Left colon (tissue), 2 donors: ENCODE measurements at regions of chr14 and their contacts with region 1.

Region 1: GRCh38 chr14:22375321-22375930 is 213.6 kb downstream of the DAD1 start:
- DNase-seq: no peak
- ATAC-seq: peak; percentile 71

Region 2: DNA sequence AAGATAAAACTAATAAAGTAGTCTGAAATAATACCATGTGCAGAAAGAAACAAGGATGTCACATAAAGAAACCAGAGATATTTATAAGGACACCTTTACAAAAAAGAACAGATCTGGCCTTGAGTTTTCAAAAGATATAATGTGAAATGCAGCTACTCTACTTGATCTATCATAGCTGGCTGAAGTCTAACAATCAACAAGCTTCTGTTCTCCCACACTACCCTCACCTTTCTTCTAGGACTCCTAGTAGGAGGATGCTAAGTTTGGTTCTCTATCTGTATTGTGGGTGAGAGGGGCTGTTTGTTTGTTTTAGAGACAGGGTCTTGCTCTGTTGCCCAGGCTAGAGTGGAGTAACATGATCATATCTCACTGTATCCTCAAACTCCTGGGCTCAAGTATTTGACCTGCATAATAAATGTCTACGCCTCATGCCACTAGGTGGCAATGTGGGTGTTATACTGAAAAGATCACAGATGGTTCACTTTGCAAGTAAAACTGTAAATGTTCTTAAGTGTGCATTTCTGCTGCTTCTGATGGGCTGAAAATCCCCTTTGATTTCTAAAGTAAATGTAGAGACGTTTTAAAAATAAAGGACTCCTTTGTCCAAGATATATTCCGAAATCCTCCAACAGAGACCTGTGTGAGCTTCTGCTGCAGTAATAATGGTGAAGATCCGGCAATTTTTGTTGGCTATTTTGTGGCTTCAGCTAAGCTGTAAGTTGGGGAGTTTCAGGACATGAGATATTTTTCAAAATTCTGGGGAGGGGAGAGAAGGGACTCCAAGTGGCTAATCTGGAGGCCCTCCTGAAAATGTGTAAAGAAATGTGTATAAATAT is 55.7 kb before region 1 on chr14:
- intact Hi-C with region 1: loop called in 1 of 2 experiments (anchors 5 kb)
- DNase-seq: peak; percentile 28 to 72
- ATAC-seq: peak; percentile 74